HCT116 (cell line): ENCODE measurements at regions of chr5 and their contacts with region 1.

Region 1: GRCh38 chr5:133460172-133460758 is 152.1 kb downstream of the FSTL4 start:
- DNase-seq: peak; percentile 19
- ATAC-seq: peak; percentile 93
- H3K4me3 ChIP-seq: no peak overlapping the region
- H3K27ac ChIP-seq: no peak overlapping the region
- H3K4me1 ChIP-seq: no peaks in the 10 kb centered on the region
- H3K27me3 ChIP-seq: 0 out of 2 replicates have a peak, but pooled peaks cover 3% of the 10 kb centered on the region
- CTCF ChIP-seq: peak; percentile 79 to 98 (median 96)
- POLR2A ChIP-seq: no peak
- RAD21 ChIP-seq: peak; percentile 88

Region 2: DNA sequence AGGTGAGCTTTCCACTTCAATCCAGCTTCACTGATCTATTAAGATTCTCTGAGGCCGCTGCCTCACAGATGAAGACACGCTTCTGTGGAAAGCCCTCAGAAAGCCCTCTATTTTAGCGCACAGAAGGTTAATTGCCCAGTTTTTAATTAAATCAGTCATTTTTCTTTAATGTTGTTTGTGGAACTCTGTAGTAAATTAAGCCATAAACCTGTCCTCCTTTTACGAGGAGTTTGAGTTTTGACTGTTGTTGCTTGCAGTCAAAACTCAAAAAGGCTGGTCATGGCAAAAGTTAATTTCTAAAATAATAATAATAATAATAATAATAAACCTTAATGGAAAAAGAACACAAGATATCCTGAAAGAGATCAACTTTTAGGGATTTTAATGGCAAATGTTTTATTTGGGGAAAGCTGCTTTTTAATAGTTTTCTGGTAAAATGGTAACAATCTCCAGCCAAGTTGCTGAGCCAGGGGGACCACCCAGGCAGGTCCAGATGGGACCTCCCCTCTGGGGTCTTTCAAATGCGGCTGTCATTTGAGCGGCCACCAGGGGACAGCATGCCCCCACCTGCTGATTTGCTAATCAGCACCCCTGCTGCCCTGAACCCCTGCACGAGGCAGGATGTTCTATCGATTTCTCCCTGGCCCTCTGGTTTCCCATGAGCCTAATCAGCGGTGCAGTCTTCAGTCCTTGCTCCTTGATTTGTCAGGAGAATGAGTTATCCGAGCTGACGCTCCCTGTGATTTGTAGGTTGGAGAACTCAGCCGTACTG is 95.1 kb before region 1 on chr5:
- CTCF ChIA-PET with region 1: no interaction called
- POLR2A ChIA-PET with region 1: no interaction called
- RAD21 ChIA-PET with region 1: no interaction called
- intact Hi-C with region 1: loop called (anchors 1 kb)
- DNase-seq: no peak
- ATAC-seq: no peak
- H3K4me3 ChIP-seq: no peak overlapping the region
- H3K27ac ChIP-seq: no peak overlapping the region
- H3K4me1 ChIP-seq: peaks cover 0 to 8% of the 10 kb centered on the region in 2 experiments; a peak in 2 of 4 replicates
- H3K27me3 ChIP-seq: no peaks in the 10 kb centered on the region
- CTCF ChIP-seq: peak; percentile 47 to 69 (median 67); a peak in 5 of 6 replicates
- POLR2A ChIP-seq: no peak
- RAD21 ChIP-seq: peak; percentile 76

Region 3: GRCh38 chr5:133423618-133424282 is 36.5 kb before region 1 on chr5:
- CTCF ChIA-PET with region 1: interaction called, 6 read pairs
- POLR2A ChIA-PET with region 1: no interaction called
- RAD21 ChIA-PET with region 1: interaction called in 1 of 2 experiments, 4 read pairs
- intact Hi-C with region 1: loop called (anchors 1 kb)
- DNase-seq: peak; percentile 16
- ATAC-seq: peak; percentile 94
- H3K4me3 ChIP-seq: no peak overlapping the region
- H3K27ac ChIP-seq: no peak overlapping the region
- H3K4me1 ChIP-seq: peaks cover 0 to 9% of the 10 kb centered on the region in 2 experiments; a peak in 1 of 4 replicates
- H3K27me3 ChIP-seq: 0 out of 2 replicates have a peak, but pooled peaks cover 5% of the 10 kb centered on the region
- CTCF ChIP-seq: peak; percentile 62 to 92 (median 87)
- POLR2A ChIP-seq: no peak
- RAD21 ChIP-seq: peak; percentile 68